CD4-positive, alpha-beta T cell (primary cell): ENCODE measurements at regions of chr12 and their contacts with region 1.

Region 1: DNA sequence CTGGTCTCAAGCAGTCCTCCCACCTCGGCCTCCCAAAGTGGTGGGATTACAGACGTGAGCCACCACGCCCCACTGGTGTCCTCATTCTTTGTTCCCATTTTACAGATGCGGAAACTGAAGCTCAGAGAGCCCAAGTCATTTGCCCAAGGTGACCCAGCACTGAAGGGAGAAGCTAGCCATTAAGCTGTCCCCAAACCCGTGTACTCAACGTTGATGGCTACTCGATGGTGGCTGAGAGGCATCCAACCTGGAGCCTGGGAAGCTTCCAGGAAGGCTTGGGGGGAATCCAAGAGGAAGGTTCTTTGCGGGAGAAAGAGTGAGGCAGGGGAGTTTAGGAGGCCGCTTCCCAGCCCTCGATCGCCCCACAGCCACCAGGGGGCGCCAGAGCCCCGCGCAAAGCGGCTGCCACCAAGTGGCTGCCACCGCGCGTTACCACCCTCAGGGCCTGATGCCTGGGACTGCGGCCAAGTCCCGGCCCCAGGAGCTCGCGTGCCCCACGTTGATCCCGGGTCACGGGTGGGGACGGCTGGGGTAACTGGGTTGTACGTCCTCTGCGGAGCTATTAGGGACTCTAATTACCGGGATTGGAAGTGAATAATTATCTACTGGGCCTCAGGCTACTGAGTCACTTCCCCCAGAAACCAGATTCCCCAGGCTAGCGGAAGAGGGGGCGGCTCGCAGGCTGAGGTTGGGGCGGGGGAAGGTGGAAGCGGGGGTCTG is 8.8 kb upstream of the SH2B3 start:
- DNase-seq: peak; percentile 78 to 93 (median 86)
- ATAC-seq: peak; percentile 97
- H3K4me3 ChIP-seq: peak overlapping the region; percentile 5
- H3K4me3 Mint-ChIP-seq: peak overlapping the region; percentile 56
- H3K27ac ChIP-seq: no peak overlapping the region
- H3K27ac Mint-ChIP-seq: no peak overlapping the region
- H3K4me1 ChIP-seq: peaks cover 8% of the 10 kb centered on the region
- H3K4me1 Mint-ChIP-seq: peaks cover 5% of the 10 kb centered on the region
- H3K27me3 ChIP-seq: no peaks in the 10 kb centered on the region
- H3K27me3 Mint-ChIP-seq: no peaks in the 10 kb centered on the region
- CTCF ChIP-seq: peak; percentile 97

Region 2: DNA sequence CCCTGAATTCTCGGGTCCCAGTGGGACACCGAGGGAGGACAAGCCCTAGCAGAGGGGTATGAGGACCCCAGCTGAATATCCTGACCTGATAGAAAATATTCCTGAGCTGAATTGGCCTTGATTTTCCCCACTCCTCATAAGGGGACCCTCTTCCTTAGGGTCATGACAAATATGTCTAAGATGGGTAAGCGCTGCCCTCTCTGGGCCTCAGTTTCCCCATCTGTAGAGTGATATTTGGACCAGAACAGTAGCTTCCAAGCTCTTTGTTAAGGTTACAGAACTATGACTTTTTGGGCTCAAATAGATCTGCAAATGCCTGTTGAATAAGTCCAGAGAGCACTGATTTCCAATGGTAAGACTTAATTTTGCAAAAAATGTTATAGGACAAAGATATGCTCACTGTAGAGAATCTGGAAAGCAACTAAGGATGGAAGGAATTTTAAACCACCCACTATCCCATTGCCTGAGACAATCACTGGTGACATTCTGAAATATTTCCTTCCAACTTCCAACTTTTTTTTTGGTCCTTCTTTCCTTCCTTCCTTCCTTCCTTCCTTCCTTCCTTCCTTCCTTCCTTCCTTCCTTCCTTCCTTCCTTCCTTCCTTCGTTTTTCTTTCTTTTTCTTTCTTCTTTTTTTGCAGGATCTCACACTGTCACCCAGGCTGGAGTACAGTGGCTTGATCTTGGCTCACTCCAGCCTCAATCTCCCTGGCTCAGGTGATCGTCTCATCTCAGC is 508.5 kb before region 1 on chr12:
- CTCF ChIA-PET with region 1: no interaction called
- POLR2A ChIA-PET with region 1: no interaction called
- intact Hi-C with region 1: no loop called
- DNase-seq: no peak
- ATAC-seq: no peak
- H3K4me3 ChIP-seq: peak overlapping the region; percentile 71
- H3K4me3 Mint-ChIP-seq: peak overlapping the region; percentile 89
- H3K27ac ChIP-seq: no peak overlapping the region
- H3K27ac Mint-ChIP-seq: no peak overlapping the region
- H3K4me1 ChIP-seq: peaks cover 11% of the 10 kb centered on the region
- H3K4me1 Mint-ChIP-seq: peaks cover 3% of the 10 kb centered on the region
- H3K27me3 ChIP-seq: no peaks in the 10 kb centered on the region
- H3K27me3 Mint-ChIP-seq: no peaks in the 10 kb centered on the region
- CTCF ChIP-seq: peak; percentile 54

Region 3: DNA sequence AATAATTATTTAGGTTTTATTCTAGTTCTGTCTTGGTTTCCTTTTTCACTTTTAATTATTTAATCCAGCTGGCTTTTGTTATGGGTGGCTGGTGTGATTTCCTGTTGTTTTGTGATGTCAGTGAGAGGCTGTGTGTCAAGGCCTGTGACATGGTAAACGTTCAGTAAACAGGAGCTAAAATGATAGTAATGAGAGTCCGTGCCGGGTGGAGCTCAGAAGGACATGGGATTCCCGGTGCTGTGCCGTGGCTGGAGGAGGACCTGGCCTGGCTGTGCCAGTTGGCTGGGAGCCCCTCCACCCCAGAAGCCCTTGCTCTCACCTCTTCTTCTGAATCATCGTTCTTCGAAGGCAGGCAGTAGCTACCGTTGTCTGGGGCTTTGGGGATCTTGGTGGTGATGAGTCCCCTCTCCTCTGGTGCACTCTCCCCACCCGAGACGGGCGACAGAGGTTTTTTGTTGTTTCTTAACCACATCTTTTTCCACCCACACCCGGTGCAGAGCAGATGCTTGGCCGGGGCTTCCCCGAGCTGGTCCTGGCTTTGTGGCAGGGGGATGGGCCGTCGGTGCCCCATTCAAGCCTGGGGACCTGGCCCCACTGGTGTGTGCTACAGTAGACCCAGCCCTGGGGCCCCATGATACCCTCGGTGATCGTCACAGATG is 37.9 kb after region 1 on chr12:
- CTCF ChIA-PET with region 1: interaction called, 487 read pairs
- POLR2A ChIA-PET with region 1: interaction called, 11 read pairs
- intact Hi-C with region 1: no loop called
- DNase-seq: peak; percentile 68 to 96 (median 82)
- ATAC-seq: peak; percentile 73
- H3K4me3 ChIP-seq: peak overlapping the region; percentile 43
- H3K4me3 Mint-ChIP-seq: peak overlapping the region; percentile 90
- H3K27ac ChIP-seq: peak overlapping the region; percentile 93 to 97
- H3K27ac Mint-ChIP-seq: peak overlapping the region; percentile 100
- H3K4me1 ChIP-seq: peaks cover 97% of the 10 kb centered on the region
- H3K4me1 Mint-ChIP-seq: peaks cover 93% of the 10 kb centered on the region
- H3K27me3 ChIP-seq: no peaks in the 10 kb centered on the region
- H3K27me3 Mint-ChIP-seq: no peaks in the 10 kb centered on the region
- CTCF ChIP-seq: no peak

Region 4: DNA sequence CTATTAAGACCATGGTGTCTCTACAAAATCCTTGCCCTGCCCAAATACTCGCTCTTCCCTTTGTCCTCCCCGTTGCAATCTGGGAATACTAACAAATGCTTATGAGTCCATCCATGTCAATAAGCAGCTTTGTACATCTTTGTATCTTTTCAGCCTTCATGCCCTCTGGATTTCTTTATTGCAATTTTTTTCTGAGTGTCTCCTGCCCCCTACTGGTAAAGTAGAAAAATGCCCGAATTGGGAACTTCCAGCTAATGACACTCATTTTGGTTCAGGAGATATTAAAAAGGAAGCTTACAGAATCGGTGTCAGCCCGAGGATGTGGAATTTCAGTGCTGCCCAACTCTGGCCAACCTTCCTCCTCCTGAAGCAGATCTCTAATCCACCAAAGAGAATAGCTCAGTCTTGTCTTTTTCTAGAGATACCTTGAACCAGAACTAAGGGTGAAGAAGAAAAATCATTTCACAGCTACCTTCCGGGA is 54.8 kb after region 1 on chr12:
- CTCF ChIA-PET with region 1: interaction called, 487 read pairs
- POLR2A ChIA-PET with region 1: interaction called, 46 read pairs
- intact Hi-C with region 1: loop called (anchors 1 kb)
- DNase-seq: peak in 3 of 14 experiments; percentile 77 to 81 (median 81)
- ATAC-seq: peak; percentile 78
- H3K4me3 ChIP-seq: no peak overlapping the region
- H3K4me3 Mint-ChIP-seq: no peak overlapping the region
- H3K27ac ChIP-seq: no peak overlapping the region
- H3K27ac Mint-ChIP-seq: peak overlapping the region; percentile 14
- H3K4me1 ChIP-seq: peaks cover 25% of the 10 kb centered on the region
- H3K4me1 Mint-ChIP-seq: peaks cover 18% of the 10 kb centered on the region
- H3K27me3 ChIP-seq: no peaks in the 10 kb centered on the region
- H3K27me3 Mint-ChIP-seq: no peaks in the 10 kb centered on the region
- CTCF ChIP-seq: peak; percentile 80

Region 5: DNA sequence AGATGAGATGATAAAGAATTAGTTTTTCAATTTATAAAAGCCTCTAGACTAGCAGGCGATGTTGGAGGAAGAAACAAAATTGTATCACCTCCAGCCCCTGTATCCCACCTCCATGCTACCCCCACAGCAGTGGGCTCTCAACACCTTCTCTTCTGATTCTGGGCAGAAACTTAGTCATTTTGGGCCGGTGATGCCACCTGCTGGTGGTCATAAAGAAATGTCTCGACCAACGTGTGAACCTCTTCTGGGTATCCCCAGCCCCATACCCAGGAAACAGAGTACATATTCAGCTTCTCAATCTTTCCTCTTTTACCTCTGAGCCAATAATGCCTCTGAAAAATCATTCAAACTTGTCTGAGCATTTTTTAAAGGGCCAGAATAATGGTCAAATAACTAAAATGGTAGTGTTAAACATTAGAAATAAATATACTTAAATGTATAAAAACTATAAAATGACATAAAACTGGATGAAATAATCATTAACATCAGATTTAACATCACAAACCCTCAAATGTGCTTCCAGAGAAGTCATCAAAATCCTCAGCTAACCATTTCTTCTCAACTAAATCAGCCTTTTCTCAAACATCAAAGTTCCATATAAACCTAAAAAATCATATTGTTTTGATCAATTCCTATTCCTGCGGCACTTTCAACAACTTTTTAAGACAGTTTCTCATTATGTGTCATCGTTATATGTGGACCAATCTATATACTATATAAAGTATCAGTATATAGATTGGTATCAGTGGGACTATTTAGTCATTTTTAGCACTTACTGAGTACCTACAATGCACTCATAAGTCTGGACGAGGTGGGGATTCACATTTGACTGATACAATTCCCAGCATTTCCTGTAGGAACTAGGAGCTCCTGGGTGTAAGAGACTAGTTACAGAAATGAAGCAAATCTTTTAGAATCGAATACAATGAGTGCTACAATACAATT is 132.8 kb after region 1 on chr12:
- CTCF ChIA-PET with region 1: interaction called, 10 read pairs
- POLR2A ChIA-PET with region 1: interaction called, 5 read pairs
- intact Hi-C with region 1: loop called (anchors 1 kb)
- DNase-seq: peak; percentile 32 to 82 (median 46)
- ATAC-seq: peak; percentile 61
- H3K4me3 ChIP-seq: no peak overlapping the region
- H3K4me3 Mint-ChIP-seq: no peak overlapping the region
- H3K27ac ChIP-seq: no peak overlapping the region
- H3K27ac Mint-ChIP-seq: no peak overlapping the region
- H3K4me1 ChIP-seq: no peaks in the 10 kb centered on the region
- H3K4me1 Mint-ChIP-seq: no peaks in the 10 kb centered on the region
- H3K27me3 ChIP-seq: no peaks in the 10 kb centered on the region
- H3K27me3 Mint-ChIP-seq: no peaks in the 10 kb centered on the region
- CTCF ChIP-seq: peak; percentile 89

Region 6: GRCh38 chr12:111812881-111813741 is 416.2 kb after region 1 on chr12:
- CTCF ChIA-PET with region 1: no interaction called
- POLR2A ChIA-PET with region 1: no interaction called
- intact Hi-C with region 1: loop called in 1 of 2 experiments (anchors 5 kb)
- DNase-seq: peak; percentile 32 to 85 (median 48)
- ATAC-seq: peak; percentile 100
- H3K4me3 ChIP-seq: no peak overlapping the region
- H3K4me3 Mint-ChIP-seq: no peak overlapping the region
- H3K27ac ChIP-seq: no peak overlapping the region
- H3K27ac Mint-ChIP-seq: no peak overlapping the region
- H3K4me1 ChIP-seq: peaks cover 6% of the 10 kb centered on the region
- H3K4me1 Mint-ChIP-seq: peaks cover 6% of the 10 kb centered on the region
- H3K27me3 ChIP-seq: no peaks in the 10 kb centered on the region
- H3K27me3 Mint-ChIP-seq: no peaks in the 10 kb centered on the region
- CTCF ChIP-seq: peak; percentile 90